Heart right ventricle (tissue), 16 donors: ENCODE measurements at regions of chr6 and their contacts with region 1.

Region 1: GRCh38 chr6:144434308-144434990 is 149.3 kb downstream of the UTRN start:
- DNase-seq: no peak
- ATAC-seq: peak in 6 of 8 donors; percentile 16 to 64 (median 48)
- H3K4me3 ChIP-seq: no peak overlapping the region
- H3K27ac ChIP-seq: peak overlapping the region in 2 of 10 donors; percentile 52 to 61
- H3K4me1 ChIP-seq: peaks cover 3 to 50% (median 18%) of the 10 kb centered on the region in 9 donors
- H3K27me3 ChIP-seq: no peaks in the 10 kb centered on the region
- CTCF ChIP-seq: no peak

Region 2: GRCh38 chr6:144294016-144294415 is 140.4 kb before region 1 on chr6:
- intact Hi-C with region 1: loop called in 4 of 10 experiments (anchors 5 to 10 kb)
- DNase-seq: no peak
- ATAC-seq: no peak
- H3K4me3 ChIP-seq: no peak overlapping the region
- H3K27ac ChIP-seq: peak overlapping the region in 1 of 10 donors; percentile 8
- H3K4me1 ChIP-seq: peaks cover 3 to 68% (median 42%) of the 10 kb centered on the region in 9 donors
- H3K27me3 ChIP-seq: no peaks in the 10 kb centered on the region
- CTCF ChIP-seq: no peak

Region 3: GRCh38 chr6:144778773-144779492 is 344.5 kb after region 1 on chr6:
- intact Hi-C with region 1: no loop called
- DNase-seq: no peak
- ATAC-seq: no peak
- H3K4me3 ChIP-seq: no peak overlapping the region
- H3K27ac ChIP-seq: no peak overlapping the region
- H3K4me1 ChIP-seq: no peaks in the 10 kb centered on the region
- H3K27me3 ChIP-seq: no peaks in the 10 kb centered on the region
- CTCF ChIP-seq: peak in 3 of 9 donors; percentile 10 to 32 (median 15)